Mammary epithelial cell (primary cell): ENCODE measurements at regions of chr1 and their contacts with region 1.

Region 1: GRCh38 chr1:206612129-206612876 is at the start of gene EIF2D:
- DNase-seq: peak; percentile 87
- H3K4me3 ChIP-seq: peak within 1 kb of the TSS; percentile 74 to 93 (median 87)
- H3K27ac ChIP-seq: peak within 1 kb of the TSS; percentile 86
- H3K4me1 ChIP-seq: peaks cover 9% of the 10 kb centered on the region
- H3K27me3 ChIP-seq: no peaks in the 10 kb centered on the region
- CTCF ChIP-seq: peak; percentile 74 to 98
- total RNA-seq, gene EIF2D: 43.0 to 44.0 TPM

Region 2: DNA sequence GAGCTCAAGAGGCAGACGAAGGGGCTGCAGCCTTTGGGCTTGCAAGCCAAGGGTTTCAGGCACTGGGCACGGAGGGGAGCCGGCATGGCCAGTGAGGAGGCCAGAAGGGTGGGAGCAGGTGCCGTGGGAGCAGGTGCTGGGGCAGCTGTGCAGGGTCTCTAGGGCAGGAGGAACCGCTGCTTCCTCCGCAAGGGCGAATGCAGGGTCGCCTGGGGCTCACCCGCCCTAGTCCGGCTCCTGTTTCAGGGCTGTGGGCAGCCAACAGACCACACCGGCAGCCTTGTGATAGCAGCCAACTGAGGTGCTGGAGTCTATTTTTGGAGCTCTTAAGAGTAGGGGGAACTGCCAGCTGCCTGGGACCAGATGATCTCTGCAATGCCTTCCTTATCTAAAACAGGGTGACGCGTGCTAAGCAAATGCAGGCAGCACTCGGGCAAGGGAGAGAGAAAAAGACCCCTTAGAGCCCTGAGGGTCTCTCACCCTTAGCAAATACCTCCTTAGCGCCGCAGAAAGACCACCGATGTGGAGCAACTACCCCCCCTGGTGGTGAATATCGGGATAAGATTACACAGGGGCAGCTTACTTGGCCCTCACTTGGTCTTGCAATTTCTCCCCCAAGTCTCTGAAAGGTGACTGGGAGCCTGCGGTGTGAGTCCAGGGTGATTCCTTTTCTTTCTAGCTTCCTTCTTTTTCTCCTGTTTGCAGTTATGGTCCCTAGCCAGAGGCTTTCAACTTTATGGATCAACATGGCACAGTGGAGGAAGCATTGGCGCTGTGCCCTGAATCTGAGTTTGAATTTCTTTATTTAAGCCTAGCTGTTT is 51.7 kb after region 1 on chr1:
- CTCF ChIA-PET with region 1: interaction called, 4 read pairs
- dilution Hi-C with region 1: no loop called
- in situ Hi-C with region 1: loop called (anchors 5 kb)
- intact Hi-C with region 1: loop called (anchors 1 kb)
- DNase-seq: peak; percentile 36
- H3K4me3 ChIP-seq: no peak overlapping the region
- H3K27ac ChIP-seq: no peak overlapping the region
- H3K4me1 ChIP-seq: peaks cover 5% of the 10 kb centered on the region
- H3K27me3 ChIP-seq: no peaks in the 10 kb centered on the region
- CTCF ChIP-seq: peak; percentile 79 to 85

Region 3: DNA sequence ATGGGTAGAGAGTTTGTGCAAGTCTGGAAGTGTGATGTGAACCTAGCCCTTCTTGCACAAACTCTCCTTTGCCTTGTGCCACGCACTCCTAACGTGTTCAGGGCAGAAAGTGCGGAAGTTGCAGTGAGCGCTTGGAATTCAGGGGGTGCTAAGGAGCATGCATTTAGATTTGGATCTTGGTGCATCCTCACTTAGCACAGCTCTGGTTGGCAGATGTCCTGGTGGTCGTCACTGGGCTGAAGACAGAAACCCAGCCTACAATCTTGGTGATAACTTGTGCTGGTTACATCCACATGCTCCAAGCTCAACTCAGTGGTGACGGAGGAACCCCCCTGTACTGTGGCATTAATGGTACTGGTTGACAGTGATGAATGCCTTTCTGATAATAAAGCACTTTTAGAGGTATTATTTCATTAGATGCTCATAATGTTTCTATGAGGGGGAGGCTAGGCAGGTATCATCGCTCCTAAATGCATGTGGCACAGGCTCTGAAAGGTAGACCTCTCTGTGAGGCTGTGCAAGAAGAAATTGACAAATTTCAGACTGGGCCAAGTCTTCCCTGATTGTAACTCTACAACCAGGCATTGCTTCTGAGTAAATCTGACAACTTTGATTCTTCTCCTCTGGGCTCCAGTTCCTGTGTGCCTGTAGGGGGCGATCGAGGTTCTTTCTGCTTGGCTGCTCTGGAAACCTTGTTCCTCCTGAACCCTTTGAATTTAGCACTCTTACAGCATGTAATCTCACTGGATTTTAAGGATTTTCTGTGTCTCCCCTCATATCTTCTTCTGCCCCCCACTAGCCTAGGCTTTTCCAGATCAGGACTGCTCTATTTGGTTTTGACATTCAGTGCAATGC is 113.0 kb after region 1 on chr1:
- CTCF ChIA-PET with region 1: no interaction called
- dilution Hi-C with region 1: no loop called
- in situ Hi-C with region 1: no loop called
- intact Hi-C with region 1: loop called (anchors 5 kb)
- DNase-seq: no peak
- H3K4me3 ChIP-seq: no peak overlapping the region
- H3K27ac ChIP-seq: no peak overlapping the region
- H3K4me1 ChIP-seq: peaks cover 19% of the 10 kb centered on the region
- H3K27me3 ChIP-seq: no peaks in the 10 kb centered on the region
- CTCF ChIP-seq: peak; percentile 62 to 68

Region 4: GRCh38 chr1:206808615-206809014 is 196.3 kb after region 1 on chr1:
- CTCF ChIA-PET with region 1: no interaction called
- dilution Hi-C with region 1: no loop called
- in situ Hi-C with region 1: no loop called
- intact Hi-C with region 1: loop called (anchors 1 kb)
- DNase-seq: no peak
- H3K4me3 ChIP-seq: no peak overlapping the region
- H3K27ac ChIP-seq: no peak overlapping the region
- H3K4me1 ChIP-seq: peaks cover 7% of the 10 kb centered on the region
- H3K27me3 ChIP-seq: no peaks in the 10 kb centered on the region
- CTCF ChIP-seq: peak; percentile 15 to 52

Region 5: GRCh38 chr1:206967096-206967849 is 355.0 kb after region 1 on chr1:
- CTCF ChIA-PET with region 1: no interaction called
- dilution Hi-C with region 1: no loop called
- in situ Hi-C with region 1: loop called in 1 of 2 experiments (anchors 25 kb)
- intact Hi-C with region 1: no loop called
- DNase-seq: no peak
- H3K4me3 ChIP-seq: no peak overlapping the region
- H3K27ac ChIP-seq: no peak overlapping the region
- H3K4me1 ChIP-seq: no peaks in the 10 kb centered on the region
- H3K27me3 ChIP-seq: no peaks in the 10 kb centered on the region
- CTCF ChIP-seq: no peak